Activated B cell treated with CpG ODN at 0.5 μM for 24 hours (primary cell): ENCODE measurements at regions of chr7 and their contacts with region 1.

Region 1: GRCh38 chr7:94975336-94975735 is 67.9 kb downstream of the PPP1R9A start:
- DNase-seq: no peak
- ATAC-seq: no peak
- H3K4me3 Mint-ChIP-seq: no peak overlapping the region
- H3K27ac Mint-ChIP-seq: no peak overlapping the region
- H3K4me1 Mint-ChIP-seq: no peaks in the 10 kb centered on the region
- H3K27me3 Mint-ChIP-seq: peaks cover under 1% of the 10 kb centered on the region
- CTCF ChIP-seq: no peak

Region 2: GRCh38 chr7:94856643-94857042 is 118.7 kb before region 1 on chr7:
- CTCF ChIA-PET with region 1: no interaction called
- POLR2A ChIA-PET with region 1: no interaction called
- intact Hi-C with region 1: no loop called
- DNase-seq: no peak
- ATAC-seq: no peak
- H3K4me3 Mint-ChIP-seq: no peak overlapping the region
- H3K27ac Mint-ChIP-seq: no peak overlapping the region
- H3K4me1 Mint-ChIP-seq: no peaks in the 10 kb centered on the region
- H3K27me3 Mint-ChIP-seq: no peaks in the 10 kb centered on the region
- CTCF ChIP-seq: no peak

Region 3: DNA sequence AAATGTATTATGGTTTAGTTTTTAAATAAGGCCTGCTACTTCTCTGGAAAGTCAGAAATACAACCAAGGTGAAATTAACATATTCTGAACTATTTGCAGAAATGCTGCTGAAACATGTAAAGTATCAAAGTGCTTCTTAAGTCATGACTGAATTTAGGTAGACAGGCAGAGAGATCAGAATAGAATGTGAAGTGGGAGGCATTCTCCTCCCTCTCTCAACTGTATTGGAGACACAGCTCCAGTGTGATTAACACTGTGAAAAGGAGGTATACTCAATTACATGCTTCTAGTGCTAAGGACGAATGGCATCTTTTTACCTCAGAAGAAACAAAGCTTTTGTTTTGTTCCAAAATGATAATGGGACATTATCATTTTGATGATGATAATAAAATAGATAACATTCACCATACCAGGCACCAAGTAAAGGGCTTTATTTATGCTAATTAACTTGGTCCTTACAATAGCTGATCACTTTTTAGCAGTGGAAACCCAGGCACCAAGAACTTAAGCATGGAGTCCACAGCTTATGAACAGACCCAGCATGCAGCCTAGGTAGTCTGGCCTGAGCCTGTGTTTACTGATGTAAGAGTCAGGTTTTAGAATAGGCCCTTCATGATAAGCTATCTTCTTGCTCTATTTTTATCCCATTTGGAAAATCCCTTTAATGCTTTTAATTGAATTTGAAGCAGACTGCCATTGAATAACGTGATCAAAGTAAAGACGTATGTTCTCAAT is 41.9 kb before region 1 on chr7:
- CTCF ChIA-PET with region 1: no interaction called
- POLR2A ChIA-PET with region 1: no interaction called
- intact Hi-C with region 1: no loop called
- DNase-seq: no peak
- ATAC-seq: no peak
- H3K4me3 Mint-ChIP-seq: no peak overlapping the region
- H3K27ac Mint-ChIP-seq: no peak overlapping the region
- H3K4me1 Mint-ChIP-seq: no peaks in the 10 kb centered on the region
- H3K27me3 Mint-ChIP-seq: no peaks in the 10 kb centered on the region
- CTCF ChIP-seq: no peak

Region 4: GRCh38 chr7:95035295-95035694 is 60.0 kb after region 1 on chr7:
- CTCF ChIA-PET with region 1: no interaction called
- POLR2A ChIA-PET with region 1: no interaction called
- intact Hi-C with region 1: loop called (anchors 10 kb)
- DNase-seq: no peak
- ATAC-seq: no peak
- H3K4me3 Mint-ChIP-seq: no peak overlapping the region
- H3K27ac Mint-ChIP-seq: no peak overlapping the region
- H3K4me1 Mint-ChIP-seq: no peaks in the 10 kb centered on the region
- H3K27me3 Mint-ChIP-seq: no peaks in the 10 kb centered on the region
- CTCF ChIP-seq: no peak